Activated naive CD4-positive, alpha-beta T cell treated with anti-CD3 and anti-CD28 coated beads for 36 hours (primary cell): ENCODE measurements at regions of chr16 and their contacts with region 1.

Region 1: GRCh38 chr16:67521095-67521804 is 7.4 kb upstream of the RIPOR1 start:
- DNase-seq: peak; percentile 100
- H3K4me3 Mint-ChIP-seq: peak overlapping the region; percentile 84
- H3K27ac Mint-ChIP-seq: peak overlapping the region; percentile 96
- H3K4me1 Mint-ChIP-seq: peaks cover 11% of the 10 kb centered on the region
- H3K27me3 Mint-ChIP-seq: no peaks in the 10 kb centered on the region

Region 2: DNA sequence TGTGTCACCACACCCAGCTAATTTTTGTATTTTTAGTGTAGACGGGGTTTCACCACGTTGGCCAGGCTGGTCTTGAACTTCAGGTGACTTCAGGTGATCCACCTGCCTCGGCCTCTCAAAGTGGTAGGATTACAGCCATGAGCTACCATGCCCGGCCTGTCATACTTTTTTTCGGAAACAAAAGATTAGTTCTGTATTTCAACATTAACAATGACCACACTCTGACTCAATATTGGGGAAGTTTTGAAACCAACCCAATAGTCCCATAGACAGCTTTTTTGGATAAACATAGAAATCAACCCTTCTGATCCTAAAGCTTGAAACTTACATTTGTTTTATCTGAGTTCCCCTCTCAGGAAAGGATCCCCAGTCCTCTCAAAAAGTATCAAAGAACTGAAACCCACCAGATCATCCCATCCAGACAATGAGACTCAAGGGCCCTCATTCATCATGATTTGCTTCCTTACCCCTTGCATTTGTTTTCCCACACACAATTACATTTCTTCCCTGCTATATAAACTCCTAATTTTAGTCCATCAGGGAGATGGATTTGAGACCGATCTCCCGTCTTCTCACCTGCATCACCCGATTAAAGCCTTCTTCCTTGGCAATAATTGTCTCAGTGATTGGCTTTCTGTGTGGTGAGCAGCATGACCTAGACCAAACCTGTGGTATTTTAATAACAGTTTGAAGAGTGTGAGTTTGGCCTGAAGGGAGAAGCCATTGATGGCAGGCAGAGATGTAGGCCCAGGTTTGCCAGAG is 30.7 kb before region 1 on chr16:
- CTCF ChIA-PET with region 1: interaction called, 195 read pairs
- intact Hi-C with region 1: no loop called
- DNase-seq: no peak
- H3K4me3 Mint-ChIP-seq: no peak overlapping the region
- H3K27ac Mint-ChIP-seq: peak overlapping the region; percentile 34
- H3K4me1 Mint-ChIP-seq: peaks cover 14% of the 10 kb centered on the region
- H3K27me3 Mint-ChIP-seq: no peaks in the 10 kb centered on the region

Region 3: GRCh38 chr16:67537270-67537635 is 16.0 kb after region 1 on chr16:
- CTCF ChIA-PET with region 1: interaction called, 28 read pairs
- intact Hi-C with region 1: loop called (anchors 1 kb)
- DNase-seq: peak; percentile 71
- H3K4me3 Mint-ChIP-seq: peak overlapping the region; percentile 79
- H3K27ac Mint-ChIP-seq: peak overlapping the region; percentile 75
- H3K4me1 Mint-ChIP-seq: peaks cover 21% of the 10 kb centered on the region
- H3K27me3 Mint-ChIP-seq: peaks cover 2% of the 10 kb centered on the region

Region 4: DNA sequence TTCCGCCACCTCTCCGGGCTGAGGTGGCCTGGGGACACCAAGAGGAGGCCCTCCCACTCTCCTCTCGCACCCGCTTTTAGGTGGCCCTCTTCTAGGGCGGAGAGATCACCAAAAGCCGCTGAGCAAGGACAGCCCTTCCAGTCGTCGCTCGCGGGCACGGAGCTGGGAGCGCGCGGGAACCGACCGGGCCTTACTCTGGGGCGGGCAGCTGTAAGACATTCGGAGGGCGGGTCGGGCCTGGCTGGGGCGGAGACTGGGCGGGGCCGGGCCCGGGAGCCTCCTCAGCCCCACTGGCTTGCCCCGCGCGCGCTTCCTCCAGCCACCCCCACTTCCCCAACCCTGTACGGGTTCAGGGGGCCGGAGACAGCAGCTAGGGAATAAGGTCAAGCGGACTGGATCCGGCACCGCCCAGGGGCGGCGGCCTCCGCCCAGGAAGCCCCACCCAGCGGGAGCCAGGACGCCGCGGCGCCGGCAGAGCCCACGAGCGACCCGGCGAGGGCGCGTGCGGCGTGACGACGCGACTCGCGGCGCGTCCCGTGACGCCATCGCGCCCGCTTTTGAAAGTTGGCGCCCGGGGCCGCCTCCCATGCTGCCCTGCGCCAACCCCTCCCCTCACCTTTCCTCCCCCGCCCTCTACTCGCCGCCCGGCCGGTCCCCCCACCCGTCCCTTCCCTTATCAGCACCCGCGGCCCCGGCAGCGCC is 40.7 kb after region 1 on chr16:
- CTCF ChIA-PET with region 1: interaction called, 11 read pairs
- intact Hi-C with region 1: loop called (anchors 1 kb)
- DNase-seq: peak; percentile 98
- H3K4me3 Mint-ChIP-seq: peak overlapping the region; percentile 78
- H3K27ac Mint-ChIP-seq: peak overlapping the region; percentile 86
- H3K4me1 Mint-ChIP-seq: peaks cover 45% of the 10 kb centered on the region
- H3K27me3 Mint-ChIP-seq: no peaks in the 10 kb centered on the region

Region 5: DNA sequence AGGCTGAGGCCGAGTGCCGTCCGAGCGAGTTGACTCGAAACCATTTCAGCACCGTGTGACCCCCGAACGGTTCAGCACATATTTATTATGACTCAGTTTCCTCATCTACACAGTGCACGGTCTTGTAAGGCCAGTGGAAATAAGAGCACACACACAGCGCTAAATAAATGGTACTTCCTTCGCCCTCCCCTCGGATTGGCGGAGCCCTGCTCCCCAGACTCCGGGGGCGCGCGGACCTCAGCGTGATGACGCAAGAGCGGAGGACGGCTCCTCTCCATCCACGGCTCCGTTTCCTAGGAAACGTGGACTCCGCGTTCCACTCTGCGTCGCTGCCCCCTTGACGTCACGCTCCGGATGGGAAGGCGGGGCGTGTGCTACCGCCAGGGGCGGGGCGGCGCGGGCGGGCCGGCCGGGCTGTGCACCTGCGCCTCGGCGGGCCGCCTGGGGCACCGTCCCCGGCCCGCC is 139.3 kb after region 1 on chr16 and contains the start of gene PARD6A:
- CTCF ChIA-PET with region 1: interaction called, 131 read pairs
- intact Hi-C with region 1: loop called (anchors 1 kb)
- DNase-seq: peak; percentile 97
- H3K4me3 Mint-ChIP-seq: peak within 1 kb of the TSS; percentile 90
- H3K27ac Mint-ChIP-seq: peak within 1 kb of the TSS; percentile 92
- H3K4me1 Mint-ChIP-seq: peaks cover 21% of the 10 kb centered on the region
- H3K27me3 Mint-ChIP-seq: no peaks in the 10 kb centered on the region
- total RNA-seq, gene PARD6A: 7.3 to 8.4 TPM

Region 6: GRCh38 chr16:67719048-67719777 is 198.0 kb after region 1 on chr16 and contains the start of gene GFOD2:
- CTCF ChIA-PET with region 1: interaction called, 9 read pairs
- intact Hi-C with region 1: loop called (anchors 5 kb)
- DNase-seq: peak; percentile 99
- H3K4me3 Mint-ChIP-seq: peak within 1 kb of the TSS; percentile 96
- H3K27ac Mint-ChIP-seq: peak within 1 kb of the TSS; percentile 96
- H3K4me1 Mint-ChIP-seq: peaks cover 36% of the 10 kb centered on the region
- H3K27me3 Mint-ChIP-seq: no peaks in the 10 kb centered on the region
- total RNA-seq, gene GFOD2: 7.3 to 8.2 TPM

Region 7: DNA sequence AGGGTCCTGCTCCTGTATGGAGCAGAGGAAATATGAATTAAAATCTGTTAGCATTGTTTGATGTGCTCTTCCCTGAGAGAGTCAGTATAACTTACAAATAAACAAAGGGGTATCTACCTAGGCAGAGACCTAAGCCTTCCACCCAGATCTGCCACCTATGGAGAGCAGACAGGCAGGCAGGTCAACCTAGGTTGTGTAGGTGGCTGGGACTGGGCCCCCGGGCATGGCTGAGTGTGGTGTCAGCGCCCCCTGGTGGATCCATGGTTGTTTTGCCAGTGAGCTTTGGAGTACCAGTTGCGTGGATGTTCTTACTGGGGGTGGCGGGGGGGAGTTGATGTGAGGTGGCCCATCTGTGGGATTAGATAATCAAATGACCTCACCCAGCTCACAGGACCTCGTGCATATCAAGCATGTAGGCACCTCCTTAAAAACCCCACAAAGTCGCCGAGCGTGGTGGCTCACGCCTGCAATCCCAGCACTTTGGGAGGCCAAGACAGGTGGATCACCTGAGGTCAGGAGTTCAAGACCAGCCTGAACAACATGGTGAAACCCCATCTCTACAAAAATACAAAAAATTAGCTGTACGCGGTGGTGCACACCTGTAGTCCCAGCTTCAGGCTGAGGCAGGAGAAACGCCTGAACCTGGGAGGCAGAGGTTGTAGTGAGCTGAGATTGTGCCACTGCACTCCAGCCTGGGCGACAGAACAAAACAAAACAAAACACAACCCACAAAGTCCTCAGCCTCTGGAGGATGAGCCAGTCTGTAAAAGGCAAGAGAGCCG is 519.4 kb after region 1 on chr16:
- CTCF ChIA-PET with region 1: no interaction called
- intact Hi-C with region 1: loop called (anchors 1 kb)
- DNase-seq: peak; percentile 95
- H3K4me3 Mint-ChIP-seq: no peak overlapping the region
- H3K27ac Mint-ChIP-seq: no peak overlapping the region
- H3K4me1 Mint-ChIP-seq: peaks cover 7% of the 10 kb centered on the region
- H3K27me3 Mint-ChIP-seq: no peaks in the 10 kb centered on the region